Activated CD4-positive, alpha-beta T cell treated with anti-CD3 and anti-CD28 coated beads, Interleukin-2, amount 10 ng/mL, durations not matched to agents 24 days and 14 days (primary cell): ENCODE measurements at regions of chr2 and their contacts with region 1.

Region 1: DNA sequence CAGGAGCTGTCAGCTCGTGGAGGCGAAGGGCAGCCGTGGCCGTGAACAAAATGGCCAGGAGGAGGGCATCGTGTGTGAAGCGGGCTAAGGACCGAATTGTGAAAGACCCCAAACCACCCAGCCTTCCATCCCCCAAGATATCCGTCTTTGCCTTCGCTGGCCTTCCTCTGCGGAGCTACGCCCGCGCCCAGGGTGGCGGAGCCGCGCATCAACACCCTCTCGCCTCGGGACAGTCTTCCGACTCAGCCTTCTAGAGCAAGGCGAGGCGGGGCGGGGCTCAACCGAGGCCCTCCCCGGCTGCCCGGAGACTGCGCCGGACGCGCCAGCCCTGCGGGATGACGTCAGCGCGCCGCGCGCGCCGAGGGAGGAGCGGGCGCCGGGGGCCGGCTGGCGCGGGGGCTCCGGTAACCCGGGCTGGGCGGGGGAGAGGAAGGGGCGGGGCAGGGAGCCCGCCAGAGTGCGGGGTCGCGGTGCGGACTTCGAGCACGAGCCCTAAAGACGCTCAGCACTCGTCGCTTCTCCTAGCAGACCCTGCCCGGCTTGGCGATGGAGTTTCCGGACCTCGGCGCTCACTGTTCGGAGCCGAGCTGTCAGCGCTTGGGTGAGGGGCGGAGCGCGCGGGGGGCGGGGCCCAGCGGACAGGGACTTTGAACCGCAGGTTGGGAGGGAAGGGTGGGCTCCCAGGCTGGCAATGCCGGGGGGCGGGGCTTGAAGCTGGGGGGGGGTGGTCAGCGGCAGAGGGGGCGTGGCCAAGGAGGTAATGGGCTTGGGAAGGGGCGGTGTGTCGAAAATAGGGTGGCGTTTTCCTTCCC is at the start of gene ZFAND2B:
- DNase-seq: peak; percentile 99
- H3K4me3 Mint-ChIP-seq: peak within 1 kb of the TSS; percentile 83
- H3K27ac Mint-ChIP-seq: peak within 1 kb of the TSS; percentile 92
- H3K4me1 Mint-ChIP-seq: peaks cover 35% of the 10 kb centered on the region
- H3K27me3 Mint-ChIP-seq: no peaks in the 10 kb centered on the region
- total RNA-seq, gene ZFAND2B: 36.7 and 37.4 TPM in 2 replicates

Region 2: DNA sequence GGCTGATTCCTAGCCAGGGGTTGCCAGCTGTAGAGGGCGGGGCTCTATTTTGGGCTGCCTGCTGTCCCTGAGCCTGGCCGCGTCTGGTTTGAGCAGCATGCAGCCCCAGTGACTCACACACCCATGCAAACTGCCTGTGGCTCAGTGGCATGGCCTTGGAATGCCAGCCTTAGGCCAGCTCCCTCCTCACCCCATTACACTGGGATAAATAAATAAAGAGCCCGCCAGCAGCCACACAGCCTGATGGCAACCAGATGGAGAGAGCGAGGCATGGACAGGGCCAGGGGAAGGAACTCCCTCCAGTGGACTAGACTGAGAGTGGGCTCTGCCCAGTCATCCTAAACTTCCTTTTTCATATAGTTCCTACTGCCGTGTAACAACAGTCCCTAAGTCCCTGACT is 64.3 kb before region 1 on chr2:
- intact Hi-C with region 1: no loop called
- DNase-seq: no peak
- H3K4me3 Mint-ChIP-seq: no peak overlapping the region
- H3K27ac Mint-ChIP-seq: no peak overlapping the region
- H3K4me1 Mint-ChIP-seq: no peaks in the 10 kb centered on the region
- H3K27me3 Mint-ChIP-seq: no peaks in the 10 kb centered on the region

Region 3: GRCh38 chr2:219186754-219187456 is 19.7 kb before region 1 on chr2:
- intact Hi-C with region 1: no loop called
- DNase-seq: peak; percentile 55
- H3K4me3 Mint-ChIP-seq: no peak overlapping the region
- H3K27ac Mint-ChIP-seq: peak overlapping the region; percentile 66
- H3K4me1 Mint-ChIP-seq: peaks cover 9% of the 10 kb centered on the region
- H3K27me3 Mint-ChIP-seq: no peaks in the 10 kb centered on the region

Region 4: GRCh38 chr2:219245148-219245898 is 38.7 kb after region 1 on chr2 and contains the starts of genes GLB1L and STK16:
- intact Hi-C with region 1: loop called (anchors 1 kb)
- DNase-seq: peak; percentile 98
- H3K4me3 Mint-ChIP-seq: peak within 1 kb of the TSS; percentile 80
- H3K27ac Mint-ChIP-seq: peak within 1 kb of the TSS; percentile 99
- H3K4me1 Mint-ChIP-seq: peaks cover 58% of the 10 kb centered on the region
- H3K27me3 Mint-ChIP-seq: no peaks in the 10 kb centered on the region
- total RNA-seq, gene GLB1L: 4.6 and 4.9 TPM in 2 replicates
- total RNA-seq, gene STK16: 29.1 and 31.7 TPM in 2 replicates

Region 5: GRCh38 chr2:219698693-219699439 is 492.2 kb after region 1 on chr2:
- intact Hi-C with region 1: no loop called
- DNase-seq: no peak
- H3K4me3 Mint-ChIP-seq: no peak overlapping the region
- H3K27ac Mint-ChIP-seq: no peak overlapping the region
- H3K4me1 Mint-ChIP-seq: no peaks in the 10 kb centered on the region
- H3K27me3 Mint-ChIP-seq: peaks cover 27% of the 10 kb centered on the region

Region 6: GRCh38 chr2:220736777-220737176 is 1530.1 kb after region 1 on chr2:
- intact Hi-C with region 1: no loop called
- DNase-seq: no peak
- H3K4me3 Mint-ChIP-seq: no peak overlapping the region
- H3K27ac Mint-ChIP-seq: no peak overlapping the region
- H3K4me1 Mint-ChIP-seq: no peaks in the 10 kb centered on the region
- H3K27me3 Mint-ChIP-seq: no peaks in the 10 kb centered on the region